HEK293 (cell line): ENCODE measurements at regions of chr10 and their contacts with region 1.

Region 1: GRCh38 chr10:101889256-101890210 is 45.9 kb upstream of the KCNIP2 start:
- H3K4me3 ChIP-seq: no peak overlapping the region
- H3K27ac ChIP-seq: no peak overlapping the region
- H3K4me1 ChIP-seq: peaks cover 9% of the 10 kb centered on the region; the same call in 1 of the 2 replicates
- CTCF ChIP-seq: peak; percentile 56; the same call in 1 of the 2 replicates

Region 2: DNA sequence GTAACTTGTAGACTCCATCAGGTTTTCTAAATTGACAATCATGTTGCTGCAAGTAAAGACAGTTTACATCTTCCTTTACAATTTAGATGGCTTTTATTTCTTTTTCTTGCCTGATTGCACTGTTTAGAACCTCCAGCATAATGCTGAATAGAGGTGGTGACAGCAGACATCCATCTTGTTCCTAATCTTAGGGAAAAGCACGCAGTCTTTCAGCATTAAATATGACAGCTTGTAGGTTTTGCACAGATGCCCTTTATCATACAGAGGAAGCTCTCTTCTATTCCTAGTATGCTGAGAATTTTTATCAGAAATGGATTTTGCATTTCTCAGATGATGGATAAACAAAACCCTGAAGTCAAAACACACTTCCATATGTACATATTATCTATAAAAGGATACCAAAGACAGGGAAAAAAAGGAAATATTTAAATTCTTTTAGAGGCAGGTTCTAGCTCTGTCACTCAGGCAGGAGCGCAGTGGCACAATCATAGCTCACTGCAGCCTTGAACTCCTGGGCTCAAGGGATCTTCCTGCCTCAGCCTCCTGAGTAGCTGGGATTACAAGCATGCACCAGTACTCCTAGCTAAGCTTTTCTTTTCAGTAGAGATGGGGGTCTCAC is 23.1 kb after region 1 on chr10:
- CTCF ChIA-PET with region 1: interaction called, 10 read pairs
- POLR2A ChIA-PET with region 1: no interaction called
- H3K4me3 ChIP-seq: no peak overlapping the region
- H3K27ac ChIP-seq: no peak overlapping the region
- H3K4me1 ChIP-seq: no peaks in the 10 kb centered on the region
- CTCF ChIP-seq: no peak

Region 3: DNA sequence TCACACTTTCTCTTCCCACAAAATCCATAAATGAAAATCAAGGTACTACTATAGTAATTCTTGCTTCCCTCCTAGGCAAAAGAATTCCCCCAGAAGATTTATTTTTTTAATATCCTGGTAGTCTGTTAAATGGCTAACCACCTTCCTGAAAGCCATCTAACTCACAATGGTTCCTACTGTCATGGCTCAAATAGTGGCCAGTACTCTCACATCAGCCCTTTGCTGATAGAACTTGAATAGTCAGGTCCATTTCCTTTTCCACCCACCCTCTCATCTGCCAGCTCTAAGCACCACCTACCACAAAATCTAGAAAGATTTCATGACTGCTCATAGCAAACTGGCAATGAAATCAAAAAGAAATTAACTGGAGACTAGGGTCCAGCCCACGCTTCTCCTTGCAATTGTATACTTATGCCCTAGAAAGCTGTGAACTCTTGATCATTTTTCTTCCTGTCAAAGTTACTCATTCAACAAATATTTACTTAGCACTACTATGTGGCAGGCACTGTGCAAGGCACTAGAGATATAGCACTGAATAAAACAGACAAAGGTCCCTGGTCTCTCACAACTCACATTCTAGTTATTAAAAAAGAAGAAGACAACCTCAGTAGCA is 106.0 kb after region 1 on chr10:
- CTCF ChIA-PET with region 1: interaction called, 11 read pairs
- POLR2A ChIA-PET with region 1: no interaction called
- H3K4me3 ChIP-seq: no peak overlapping the region
- H3K27ac ChIP-seq: no peak overlapping the region
- H3K4me1 ChIP-seq: peaks cover 7% of the 10 kb centered on the region
- CTCF ChIP-seq: no peak

Region 4: DNA sequence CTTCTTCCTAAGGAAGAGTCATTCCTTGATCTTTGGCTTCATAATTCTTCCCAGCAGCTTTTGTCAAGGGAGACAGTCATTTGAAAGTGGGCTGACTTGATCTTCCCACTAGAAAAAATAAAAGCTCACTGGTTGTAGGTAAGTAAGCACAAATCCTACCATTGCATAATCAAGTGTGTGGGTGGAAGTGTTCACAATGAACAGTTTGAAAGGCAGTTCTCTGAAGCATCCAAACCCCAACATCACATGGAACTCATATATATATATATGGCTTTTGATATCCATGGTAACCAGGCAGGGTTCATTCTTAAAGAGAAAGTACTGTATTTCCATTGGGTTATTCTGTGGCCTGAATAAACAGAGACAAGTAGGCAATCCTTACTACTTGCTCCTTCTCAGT is 114.8 kb after region 1 on chr10:
- CTCF ChIA-PET with region 1: interaction called, 167 read pairs
- POLR2A ChIA-PET with region 1: interaction called, 3 read pairs
- H3K4me3 ChIP-seq: no peak overlapping the region
- H3K27ac ChIP-seq: no peak overlapping the region
- H3K4me1 ChIP-seq: no peaks in the 10 kb centered on the region
- CTCF ChIP-seq: no peak